ENCODE measurements at regions of chr11 and their contacts with region 1.

Region 1: DNA sequence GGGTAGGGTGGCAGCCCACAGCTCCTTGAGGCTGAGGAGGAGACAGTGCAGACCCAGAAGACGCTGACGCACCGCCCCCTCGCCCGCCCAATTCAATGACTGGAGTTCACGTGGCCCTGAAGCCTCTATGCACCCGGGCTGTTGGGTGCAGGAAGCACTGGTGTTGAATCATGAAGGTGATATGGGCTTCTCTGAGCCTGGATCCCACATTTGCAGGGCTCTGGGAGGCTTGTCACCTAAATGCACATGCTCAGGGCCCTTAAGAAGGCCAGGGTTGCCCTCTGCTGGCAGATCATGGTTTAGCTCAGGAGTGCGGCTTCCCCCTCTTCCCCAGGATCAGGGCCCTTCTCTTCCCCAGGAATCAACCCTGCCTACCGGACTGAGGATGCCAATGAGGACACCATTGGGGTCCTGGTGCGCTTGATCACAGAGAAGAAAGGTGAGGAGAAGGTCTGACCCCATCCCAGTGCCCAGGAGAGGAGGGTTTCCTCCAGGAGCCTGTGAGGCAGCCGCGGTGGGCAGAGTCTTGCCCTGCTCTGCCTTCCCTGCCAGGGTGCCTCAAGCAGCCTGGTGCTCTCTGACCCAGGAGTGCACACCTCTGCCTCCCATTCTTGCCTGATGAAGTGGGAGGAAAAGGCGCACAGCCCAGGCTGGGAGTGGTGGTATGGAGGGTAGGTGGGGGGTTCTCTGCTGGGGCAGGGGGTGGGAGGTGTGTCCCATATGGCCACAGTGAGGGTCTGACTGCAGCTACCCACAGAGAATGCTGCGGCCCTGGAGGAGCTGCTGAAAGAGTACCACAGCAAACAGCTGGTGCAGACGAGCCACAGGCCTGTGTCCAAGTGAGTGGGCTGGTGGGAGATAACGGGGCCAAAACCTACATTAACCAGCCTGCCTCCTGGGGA is 17.5 kb downstream of the RELT start:
- DNase-seq: peak; percentile 85 to 90
- H3K4me3 ChIP-seq: no peak overlapping the region
- H3K27ac ChIP-seq: no peak overlapping the region
- H3K4me1 ChIP-seq: peaks cover 0 to 21% (median 4%) of the 10 kb centered on the region in 4 donors
- H3K27me3 ChIP-seq: no peaks in the 10 kb centered on the region
- CTCF ChIP-seq: peak in 5 of 7 experiments; percentile 61 to 85 (median 80)
- EP300 ChIP-seq: no peak
- POLR2A ChIP-seq: no peak

Region 2: GRCh38 chr11:72939031-72939430 is 454.7 kb before region 1 on chr11:
- intact Hi-C with region 1: no loop called
- DNase-seq: peak in 1 of 2 donors; percentile 7
- H3K4me3 ChIP-seq: no peak overlapping the region
- H3K27ac ChIP-seq: no peak overlapping the region
- H3K4me1 ChIP-seq: peaks cover 0 to 27% (median 6%) of the 10 kb centered on the region in 4 donors
- H3K27me3 ChIP-seq: no peaks in the 10 kb centered on the region
- CTCF ChIP-seq: no peak
- EP300 ChIP-seq: no peak
- POLR2A ChIP-seq: no peak

Region 3: GRCh38 chr11:73295231-73295995 is 98.3 kb before region 1 on chr11:
- intact Hi-C with region 1: loop called (anchors 10 kb)
- DNase-seq: peak; percentile 72 to 83
- H3K4me3 ChIP-seq: no peak overlapping the region
- H3K27ac ChIP-seq: no peak overlapping the region
- H3K4me1 ChIP-seq: peaks cover 0 to 10% (median 3%) of the 10 kb centered on the region in 4 donors
- H3K27me3 ChIP-seq: peaks cover 0 to 22% (median 0%) of the 10 kb centered on the region in 3 donors
- CTCF ChIP-seq: peak in 5 of 7 experiments; percentile 72 to 89 (median 82)
- EP300 ChIP-seq: no peak
- POLR2A ChIP-seq: no peak

Region 4: DNA sequence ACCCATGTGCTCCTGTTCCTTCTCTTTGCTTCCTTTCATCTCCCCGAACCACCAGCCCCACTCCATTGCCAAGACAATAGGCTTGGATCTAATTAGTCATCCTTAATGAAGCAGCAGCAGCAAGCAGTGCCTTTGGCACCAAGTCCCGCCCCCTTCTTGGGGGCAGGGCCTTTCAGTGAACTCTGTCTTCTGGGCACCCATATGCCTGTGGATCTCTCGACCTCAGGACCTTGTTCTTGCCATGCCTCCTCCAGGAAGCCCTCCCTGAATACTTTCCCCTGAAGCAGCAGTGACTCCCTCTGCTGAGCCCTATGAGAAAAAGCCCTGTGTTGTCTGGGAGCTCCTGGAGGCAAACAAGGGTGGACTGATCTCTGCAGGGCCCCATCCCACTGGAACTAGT is 53.6 kb before region 1 on chr11:
- intact Hi-C with region 1: no loop called
- DNase-seq: no peak
- H3K4me3 ChIP-seq: no peak overlapping the region
- H3K27ac ChIP-seq: peak overlapping the region in 1 of 5 donors; percentile 12
- H3K4me1 ChIP-seq: peaks cover 30 to 75% (median 51%) of the 10 kb centered on the region in 4 donors
- H3K27me3 ChIP-seq: no peaks in the 10 kb centered on the region
- CTCF ChIP-seq: no peak
- EP300 ChIP-seq: no peak
- POLR2A ChIP-seq: no peak

Region 5: GRCh38 chr11:73350908-73351636 is 42.7 kb before region 1 on chr11:
- intact Hi-C with region 1: loop called (anchors 5 kb)
- DNase-seq: peak; percentile 70 to 87
- H3K4me3 ChIP-seq: no peak overlapping the region
- H3K27ac ChIP-seq: peak overlapping the region in 2 of 5 donors; percentile 15 to 65
- H3K4me1 ChIP-seq: peaks cover 0 to 26% (median 10%) of the 10 kb centered on the region in 4 donors
- H3K27me3 ChIP-seq: no peaks in the 10 kb centered on the region
- CTCF ChIP-seq: peak in 5 of 7 experiments; percentile 89 to 96 (median 93)
- EP300 ChIP-seq: no peak
- POLR2A ChIP-seq: no peak

Region 6: GRCh38 chr11:73439002-73439843 is 45.5 kb after region 1 on chr11:
- intact Hi-C with region 1: no loop called
- DNase-seq: peak in 1 of 2 donors; percentile 32
- H3K4me3 ChIP-seq: no peak overlapping the region
- H3K27ac ChIP-seq: no peak overlapping the region
- H3K4me1 ChIP-seq: peaks cover 0 to 13% (median 7%) of the 10 kb centered on the region in 4 donors
- H3K27me3 ChIP-seq: no peaks in the 10 kb centered on the region
- CTCF ChIP-seq: no peak
- EP300 ChIP-seq: no peak
- POLR2A ChIP-seq: no peak

Region 7: DNA sequence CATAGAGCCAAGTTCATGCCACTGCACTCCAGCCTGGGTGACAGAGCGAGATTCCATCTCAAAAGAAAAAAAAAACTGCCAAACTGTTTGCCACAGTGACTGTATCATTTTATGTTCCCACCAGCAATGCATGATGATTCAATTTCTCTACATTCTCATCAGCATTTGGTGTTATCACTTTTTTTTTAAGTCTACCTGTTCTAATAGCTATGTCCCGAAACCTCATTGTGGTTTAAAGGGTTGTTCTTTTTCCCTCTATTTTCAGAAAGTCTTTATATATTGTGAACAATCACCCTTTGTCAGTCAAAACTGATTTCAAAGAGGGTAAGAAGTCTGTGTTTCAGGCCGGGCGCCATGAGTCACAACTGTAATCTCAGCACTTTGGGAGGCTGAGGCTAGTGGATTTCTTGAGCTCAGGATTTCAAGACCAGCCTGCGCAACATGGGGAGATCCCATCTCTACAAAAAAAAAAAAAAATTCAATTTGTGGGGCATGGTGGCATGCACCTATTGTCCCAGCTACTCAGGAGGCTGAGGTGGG is 218.9 kb after region 1 on chr11:
- intact Hi-C with region 1: no loop called
- DNase-seq: no peak
- H3K4me3 ChIP-seq: no peak overlapping the region
- H3K27ac ChIP-seq: no peak overlapping the region
- H3K4me1 ChIP-seq: no peaks in the 10 kb centered on the region
- H3K27me3 ChIP-seq: no peaks in the 10 kb centered on the region
- CTCF ChIP-seq: no peak
- EP300 ChIP-seq: no peak
- POLR2A ChIP-seq: no peak